CD4-positive, alpha-beta memory T cell (primary cell): ENCODE measurements at regions of chr19 and their contacts with region 1.

Region 1: GRCh38 chr19:6737284-6738046 is at the start of gene GPR108:
- DNase-seq: peak; percentile 98 to 100 (median 99)
- H3K4me3 ChIP-seq: peak within 1 kb of the TSS; percentile 58 to 80
- H3K4me3 Mint-ChIP-seq: peak within 1 kb of the TSS; percentile 95 to 99 (median 97)
- H3K27ac ChIP-seq: peak within 1 kb of the TSS; percentile 94
- H3K27ac Mint-ChIP-seq: peak within 1 kb of the TSS; percentile 93 to 99 (median 98)
- H3K4me1 ChIP-seq: peaks cover 50% of the 10 kb centered on the region
- H3K4me1 Mint-ChIP-seq: peaks cover 17 to 52% (median 35%) of the 10 kb centered on the region in 4 donors
- H3K27me3 ChIP-seq: no peaks in the 10 kb centered on the region
- H3K27me3 Mint-ChIP-seq: no peaks in the 10 kb centered on the region
- total RNA-seq, gene GPR108: 75.6 to 85.3 TPM

Region 2: GRCh38 chr19:6372594-6373095 is 364.8 kb before region 1 on chr19 and contains the start of gene ALKBH7:
- CTCF ChIA-PET with region 1: no interaction called
- POLR2A ChIA-PET with region 1: interaction called, 5 read pairs
- intact Hi-C with region 1: loop called (anchors 2 kb)
- DNase-seq: peak; percentile 97 to 99 (median 99)
- H3K4me3 ChIP-seq: peak within 1 kb of the TSS; percentile 66 to 90
- H3K4me3 Mint-ChIP-seq: peak within 1 kb of the TSS; percentile 84 to 95 (median 92)
- H3K27ac ChIP-seq: peak within 1 kb of the TSS; percentile 92
- H3K27ac Mint-ChIP-seq: peak within 1 kb of the TSS; percentile 90 to 97 (median 95)
- H3K4me1 ChIP-seq: peaks cover 15% of the 10 kb centered on the region
- H3K4me1 Mint-ChIP-seq: peaks cover 13 to 30% (median 20%) of the 10 kb centered on the region in 4 donors
- H3K27me3 ChIP-seq: no peaks in the 10 kb centered on the region
- H3K27me3 Mint-ChIP-seq: no peaks in the 10 kb centered on the region
- total RNA-seq, gene ALKBH7: 67.4 to 73.4 TPM

Region 3: GRCh38 chr19:6530386-6531161 is 206.9 kb before region 1 on chr19 and contains the start of gene TNFSF9:
- CTCF ChIA-PET with region 1: no interaction called
- POLR2A ChIA-PET with region 1: no interaction called
- intact Hi-C with region 1: loop called (anchors 5 kb)
- DNase-seq: peak; percentile 61 to 82 (median 71)
- H3K4me3 ChIP-seq: peak within 1 kb of the TSS; percentile 38 to 57
- H3K4me3 Mint-ChIP-seq: peak within 1 kb of the TSS; percentile 82 to 98 (median 86)
- H3K27ac ChIP-seq: peak within 1 kb of the TSS; percentile 10
- H3K27ac Mint-ChIP-seq: peak within 1 kb of the TSS; percentile 48 to 92 (median 81)
- H3K4me1 ChIP-seq: peaks cover 28% of the 10 kb centered on the region
- H3K4me1 Mint-ChIP-seq: peaks cover 21 to 46% (median 34%) of the 10 kb centered on the region in 4 donors
- H3K27me3 ChIP-seq: peaks cover 13% of the 10 kb centered on the region
- H3K27me3 Mint-ChIP-seq: peaks cover 18 to 20% of the 10 kb centered on the region in 2 donors
- total RNA-seq, gene TNFSF9: 0.64 to 0.99 TPM

Region 4: DNA sequence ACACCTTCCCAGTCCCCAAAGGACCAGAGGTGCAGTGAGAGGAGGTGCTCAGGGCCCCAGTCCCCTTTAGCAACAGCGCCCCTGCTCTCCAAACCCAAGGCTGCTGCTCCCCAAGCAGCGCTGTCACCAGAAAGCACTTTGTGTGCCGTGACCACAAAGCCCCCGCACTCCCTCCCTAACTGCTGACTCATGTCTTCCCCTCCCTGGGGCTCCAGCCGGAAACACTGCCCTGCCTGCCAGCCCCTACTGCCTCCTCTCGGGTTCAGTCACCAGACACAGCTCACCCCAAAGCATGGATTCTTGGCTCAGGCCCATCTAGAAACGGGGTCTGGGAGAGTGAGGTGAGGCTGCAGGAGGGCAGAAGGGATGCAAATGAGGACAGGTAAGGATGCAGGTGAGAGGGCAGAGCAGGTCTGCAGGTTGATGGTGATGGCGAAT is 62.6 kb before region 1 on chr19:
- CTCF ChIA-PET with region 1: interaction called, 6 read pairs
- POLR2A ChIA-PET with region 1: interaction called, 22 read pairs
- intact Hi-C with region 1: loop called (anchors 1 kb)
- DNase-seq: peak; percentile 76 to 94 (median 81)
- H3K4me3 ChIP-seq: peak overlapping the region in 1 of 2 donors; percentile 44
- H3K4me3 Mint-ChIP-seq: peak overlapping the region; percentile 58 to 77 (median 72)
- H3K27ac ChIP-seq: peak overlapping the region; percentile 44
- H3K27ac Mint-ChIP-seq: peak overlapping the region; percentile 60 to 92 (median 81)
- H3K4me1 ChIP-seq: peaks cover 55% of the 10 kb centered on the region
- H3K4me1 Mint-ChIP-seq: peaks cover 39 to 82% (median 58%) of the 10 kb centered on the region in 4 donors
- H3K27me3 ChIP-seq: no peaks in the 10 kb centered on the region
- H3K27me3 Mint-ChIP-seq: no peaks in the 10 kb centered on the region

Region 5: DNA sequence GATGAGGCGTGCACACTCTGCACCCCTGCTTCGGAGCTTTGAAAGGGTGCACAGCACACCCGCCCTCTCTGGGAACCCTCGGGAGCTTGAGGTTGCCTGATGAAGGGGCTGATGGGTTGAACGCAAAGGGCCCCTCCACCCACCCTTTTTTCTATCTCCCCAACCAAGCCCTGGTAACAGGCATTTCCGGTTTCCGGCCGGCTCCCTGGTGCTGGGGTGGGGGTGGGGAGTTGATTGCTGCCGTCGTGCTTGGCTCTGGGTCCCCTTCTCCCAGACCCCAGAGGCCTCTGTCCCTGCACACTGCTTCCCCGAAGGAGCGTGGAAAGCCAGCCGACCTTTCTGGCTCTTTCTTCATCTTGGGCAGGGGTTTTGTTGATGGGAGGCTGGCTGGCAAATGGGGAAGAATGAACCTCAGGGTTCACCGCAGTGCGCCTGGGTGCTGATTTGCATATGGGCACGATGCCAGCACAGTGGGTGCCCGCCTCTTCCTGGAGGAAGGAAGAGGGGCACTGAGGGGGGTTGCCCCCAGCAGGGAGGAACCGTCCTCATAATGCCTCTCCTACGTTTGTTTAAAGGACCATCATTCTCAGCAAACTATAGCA is 64.1 kb after region 1 on chr19:
- CTCF ChIA-PET with region 1: interaction called, 4 read pairs
- POLR2A ChIA-PET with region 1: interaction called, 20 read pairs
- intact Hi-C with region 1: loop called (anchors 1 kb)
- DNase-seq: peak; percentile 82 to 86 (median 84)
- H3K4me3 ChIP-seq: peak overlapping the region; percentile 45 to 72
- H3K4me3 Mint-ChIP-seq: peak overlapping the region; percentile 83 to 96 (median 88)
- H3K27ac ChIP-seq: peak overlapping the region; percentile 78
- H3K27ac Mint-ChIP-seq: peak overlapping the region; percentile 93 to 99 (median 96)
- H3K4me1 ChIP-seq: peaks cover 54% of the 10 kb centered on the region
- H3K4me1 Mint-ChIP-seq: peaks cover 38 to 77% (median 55%) of the 10 kb centered on the region in 4 donors
- H3K27me3 ChIP-seq: no peaks in the 10 kb centered on the region
- H3K27me3 Mint-ChIP-seq: no peaks in the 10 kb centered on the region

Region 6: DNA sequence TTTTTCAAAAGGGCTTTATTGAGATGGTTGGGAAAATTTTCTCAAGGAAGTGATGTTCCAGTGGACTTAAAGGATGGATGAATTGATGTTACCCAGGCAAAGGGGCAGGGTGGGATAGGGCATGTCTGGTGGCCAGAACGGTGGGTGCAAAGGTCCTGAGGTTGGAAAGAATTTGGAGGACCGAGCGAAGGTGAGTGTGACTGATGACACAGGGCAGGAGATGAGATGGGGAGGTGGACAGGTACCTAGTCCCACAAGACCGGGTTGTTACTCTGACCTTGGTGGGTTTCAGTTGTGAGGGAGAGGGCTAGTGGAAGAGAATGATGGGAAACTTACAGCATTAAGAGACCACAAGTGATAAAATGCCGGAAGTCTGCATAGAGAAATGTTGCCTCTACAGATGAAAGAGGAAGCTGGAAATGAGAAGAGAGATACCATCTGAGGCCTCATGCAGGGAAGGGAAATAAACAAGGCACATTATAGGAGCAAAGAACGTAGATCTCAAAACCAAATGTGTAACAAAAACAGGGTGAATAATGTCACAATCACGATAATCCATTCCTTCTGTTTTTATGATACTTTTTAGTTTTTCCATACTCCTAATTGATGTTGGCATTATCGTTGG is 154.4 kb after region 1 on chr19:
- CTCF ChIA-PET with region 1: interaction called, 5 read pairs
- POLR2A ChIA-PET with region 1: interaction called, 12 read pairs
- intact Hi-C with region 1: no loop called
- DNase-seq: peak in 4 of 5 donors; percentile 26 to 48 (median 29)
- H3K4me3 ChIP-seq: no peak overlapping the region
- H3K4me3 Mint-ChIP-seq: peak overlapping the region; percentile 67 to 80 (median 74)
- H3K27ac ChIP-seq: peak overlapping the region; percentile 3
- H3K27ac Mint-ChIP-seq: peak overlapping the region; percentile 78 to 95 (median 90)
- H3K4me1 ChIP-seq: peaks cover 68% of the 10 kb centered on the region
- H3K4me1 Mint-ChIP-seq: peaks cover 64 to 95% (median 75%) of the 10 kb centered on the region in 4 donors
- H3K27me3 ChIP-seq: no peaks in the 10 kb centered on the region
- H3K27me3 Mint-ChIP-seq: no peaks in the 10 kb centered on the region

Region 7: DNA sequence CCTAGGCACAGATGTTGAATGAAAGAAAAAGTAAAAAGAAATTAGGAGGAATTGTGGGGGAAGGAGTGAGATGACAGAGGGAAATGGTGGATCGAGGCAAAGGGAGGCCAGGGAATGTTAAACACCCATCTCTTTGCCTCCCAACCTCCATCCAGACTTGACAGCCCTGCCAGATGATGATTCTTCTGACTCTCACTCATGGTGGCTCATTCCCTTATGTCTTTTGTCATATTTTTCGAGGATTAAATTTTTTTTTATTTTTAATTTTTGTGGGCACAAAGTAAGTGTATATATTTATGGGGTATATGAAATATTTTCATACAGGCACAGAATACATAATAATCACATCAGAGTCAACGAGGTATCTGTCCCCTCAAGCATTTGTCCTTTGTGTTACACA is 192.7 kb after region 1 on chr19:
- CTCF ChIA-PET with region 1: no interaction called
- POLR2A ChIA-PET with region 1: no interaction called
- intact Hi-C with region 1: no loop called
- DNase-seq: no peak
- H3K4me3 ChIP-seq: no peak overlapping the region
- H3K4me3 Mint-ChIP-seq: no peak overlapping the region
- H3K27ac ChIP-seq: no peak overlapping the region
- H3K27ac Mint-ChIP-seq: no peak overlapping the region
- H3K4me1 ChIP-seq: peaks cover 14% of the 10 kb centered on the region
- H3K4me1 Mint-ChIP-seq: peaks cover 6 to 16% (median 10%) of the 10 kb centered on the region in 4 donors
- H3K27me3 ChIP-seq: no peaks in the 10 kb centered on the region
- H3K27me3 Mint-ChIP-seq: no peaks in the 10 kb centered on the region

Region 8: GRCh38 chr19:7109678-7110289 is 372.3 kb after region 1 on chr19:
- CTCF ChIA-PET with region 1: no interaction called
- POLR2A ChIA-PET with region 1: no interaction called
- intact Hi-C with region 1: no loop called
- DNase-seq: no peak
- H3K4me3 ChIP-seq: no peak overlapping the region
- H3K4me3 Mint-ChIP-seq: no peak overlapping the region
- H3K27ac ChIP-seq: no peak overlapping the region
- H3K27ac Mint-ChIP-seq: no peak overlapping the region
- H3K4me1 ChIP-seq: no peaks in the 10 kb centered on the region
- H3K4me1 Mint-ChIP-seq: no peaks in the 10 kb centered on the region
- H3K27me3 ChIP-seq: no peaks in the 10 kb centered on the region
- H3K27me3 Mint-ChIP-seq: peaks cover 3 to 6% of the 10 kb centered on the region in 2 donors